ENCODE measurements at regions of chr5 and their contacts with region 1.

Region 1: GRCh38 chr5:73722231-73722630 is 96.2 kb downstream of the ARHGEF28 start:
- DNase-seq: no peak
- H3K4me3 ChIP-seq: no peak overlapping the region
- H3K27ac ChIP-seq: no peak overlapping the region
- H3K4me1 ChIP-seq: no peaks in the 10 kb centered on the region
- H3K27me3 ChIP-seq: no peaks in the 10 kb centered on the region
- CTCF ChIP-seq: no peak
- POLR2A ChIP-seq: no peak

Region 2: DNA sequence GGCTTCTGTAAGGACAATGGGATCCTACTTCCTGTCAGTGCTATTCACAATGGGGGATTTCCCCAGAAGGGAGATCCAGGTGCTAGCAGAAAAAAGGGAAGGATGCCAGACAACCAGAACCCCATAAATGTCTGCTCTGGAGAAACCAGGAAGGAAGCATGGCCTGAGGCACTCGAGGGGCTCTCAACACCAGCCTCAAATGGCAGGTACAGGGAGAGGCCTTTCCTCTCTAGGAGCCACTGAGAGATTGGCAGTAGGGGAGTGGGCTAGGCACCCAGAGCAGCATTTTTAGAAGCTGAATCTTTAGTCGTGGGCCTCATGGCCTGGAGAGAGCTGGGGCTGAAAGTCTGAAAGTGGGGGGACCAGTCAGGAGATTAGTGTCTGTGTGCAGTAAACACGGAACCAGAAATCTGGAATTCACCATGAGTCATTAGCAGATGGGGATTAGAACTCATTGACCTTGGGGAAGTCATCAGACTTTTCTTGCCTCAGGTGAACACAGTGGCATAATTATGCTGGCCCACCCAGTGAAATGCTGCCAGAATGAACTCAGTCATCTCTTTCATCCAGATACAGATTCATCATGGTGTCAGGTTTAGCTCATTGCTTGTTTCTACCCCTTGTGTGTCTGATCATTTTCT is 67.9 kb before region 1 on chr5:
- intact Hi-C with region 1: loop called (anchors 2 kb)
- DNase-seq: no peak
- H3K4me3 ChIP-seq: no peak overlapping the region
- H3K27ac ChIP-seq: peak overlapping the region in 1 of 2 donors; percentile 41
- H3K4me1 ChIP-seq: no peaks in the 10 kb centered on the region
- H3K27me3 ChIP-seq: no peaks in the 10 kb centered on the region
- CTCF ChIP-seq: no peak
- POLR2A ChIP-seq: no peak

Region 3: DNA sequence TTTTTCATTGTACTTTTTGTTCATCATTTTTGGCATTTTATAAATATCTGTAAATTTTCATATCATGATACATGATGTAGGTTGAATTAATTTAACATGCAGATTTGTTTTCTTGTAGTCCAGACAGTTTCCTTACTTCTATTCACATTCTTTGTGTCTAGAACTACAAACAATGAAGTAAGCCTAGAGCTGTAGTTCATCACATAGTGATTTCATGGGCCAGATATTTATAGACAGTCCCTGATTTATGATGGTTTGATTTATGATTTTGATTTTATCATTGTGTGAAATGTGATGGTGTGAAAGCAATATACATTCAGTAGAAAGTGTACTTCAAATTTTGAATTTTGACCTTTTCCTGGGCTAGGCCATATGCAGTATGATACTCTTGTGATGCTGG is 42.8 kb after region 1 on chr5:
- intact Hi-C with region 1: loop called (anchors 5 kb)
- DNase-seq: no peak
- H3K4me3 ChIP-seq: no peak overlapping the region
- H3K27ac ChIP-seq: no peak overlapping the region
- H3K4me1 ChIP-seq: no peaks in the 10 kb centered on the region
- H3K27me3 ChIP-seq: no peaks in the 10 kb centered on the region
- CTCF ChIP-seq: no peak
- POLR2A ChIP-seq: no peak

Region 4: GRCh38 chr5:73899055-73899454 is 176.8 kb after region 1 on chr5:
- intact Hi-C with region 1: no loop called
- DNase-seq: no peak
- H3K4me3 ChIP-seq: no peak overlapping the region
- H3K27ac ChIP-seq: peak overlapping the region; percentile 39 to 79
- H3K4me1 ChIP-seq: peaks cover 0 to 7% of the 10 kb centered on the region in 2 donors
- H3K27me3 ChIP-seq: no peaks in the 10 kb centered on the region
- CTCF ChIP-seq: no peak
- POLR2A ChIP-seq: no peak

Region 5: GRCh38 chr5:74056789-74057164 is 334.5 kb after region 1 on chr5:
- intact Hi-C with region 1: no loop called
- DNase-seq: no peak
- H3K4me3 ChIP-seq: no peak overlapping the region
- H3K27ac ChIP-seq: peak overlapping the region in 1 of 2 donors; percentile 0
- H3K4me1 ChIP-seq: no peaks in the 10 kb centered on the region
- H3K27me3 ChIP-seq: no peaks in the 10 kb centered on the region
- CTCF ChIP-seq: peak in 2 of 3 donors; percentile 39 to 44
- POLR2A ChIP-seq: no peak

Region 6: DNA sequence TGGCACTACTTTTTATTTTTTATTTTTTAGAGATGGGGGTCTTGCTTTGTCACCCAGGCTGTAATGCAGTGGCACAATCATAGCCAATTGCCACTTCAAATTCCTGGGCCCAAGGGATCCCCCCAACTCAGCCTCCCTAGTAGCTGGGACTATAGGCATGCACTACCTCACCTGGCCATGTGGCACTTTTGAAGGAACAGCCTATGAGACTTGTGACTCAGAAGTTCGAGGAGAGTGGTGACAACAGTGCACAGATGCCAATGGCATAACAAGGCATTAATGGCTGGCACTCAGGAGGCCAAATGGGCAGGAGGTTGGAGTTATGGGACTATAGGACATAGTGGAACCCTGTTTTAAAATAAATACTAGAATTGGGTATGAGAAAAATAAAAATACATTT is 1480.7 kb after region 1 on chr5:
- intact Hi-C with region 1: no loop called
- DNase-seq: no peak
- H3K4me3 ChIP-seq: no peak overlapping the region
- H3K27ac ChIP-seq: no peak overlapping the region
- H3K4me1 ChIP-seq: no peaks in the 10 kb centered on the region
- H3K27me3 ChIP-seq: no peaks in the 10 kb centered on the region
- CTCF ChIP-seq: no peak
- POLR2A ChIP-seq: no peak